H1 (cell line): ENCODE measurements at regions of chr1 and their contacts with region 1.

Region 1: GRCh38 chr1:20633190-20634064 is at the start of gene PINK1:
- DNase-seq: peak; percentile 67 to 100
- H3K4me3 ChIP-seq: peak within 1 kb of the TSS; percentile 70 to 80 (median 75)
- H3K27ac ChIP-seq: no peak within 1 kb of the TSS; the same call in 1 of the 2 replicates
- H3K4me1 ChIP-seq: peaks cover 0 to 7% (median 0%) of the 10 kb centered on the region in 4 experiments; a peak in 2 of 7 replicates
- H3K27me3 ChIP-seq: peaks cover 0 to 5% (median 0%) of the 10 kb centered on the region in 4 experiments; a peak in 2 of 7 replicates
- CTCF ChIP-seq: peak; percentile 93 to 97 (median 93)
- EP300 ChIP-seq: no peak
- POLR2A ChIP-seq: no peak
- RAD21 ChIP-seq: peak; percentile 76 to 82
- total RNA-seq, gene PINK1: 19.3 and 20.5 TPM in 2 replicates

Region 2: DNA sequence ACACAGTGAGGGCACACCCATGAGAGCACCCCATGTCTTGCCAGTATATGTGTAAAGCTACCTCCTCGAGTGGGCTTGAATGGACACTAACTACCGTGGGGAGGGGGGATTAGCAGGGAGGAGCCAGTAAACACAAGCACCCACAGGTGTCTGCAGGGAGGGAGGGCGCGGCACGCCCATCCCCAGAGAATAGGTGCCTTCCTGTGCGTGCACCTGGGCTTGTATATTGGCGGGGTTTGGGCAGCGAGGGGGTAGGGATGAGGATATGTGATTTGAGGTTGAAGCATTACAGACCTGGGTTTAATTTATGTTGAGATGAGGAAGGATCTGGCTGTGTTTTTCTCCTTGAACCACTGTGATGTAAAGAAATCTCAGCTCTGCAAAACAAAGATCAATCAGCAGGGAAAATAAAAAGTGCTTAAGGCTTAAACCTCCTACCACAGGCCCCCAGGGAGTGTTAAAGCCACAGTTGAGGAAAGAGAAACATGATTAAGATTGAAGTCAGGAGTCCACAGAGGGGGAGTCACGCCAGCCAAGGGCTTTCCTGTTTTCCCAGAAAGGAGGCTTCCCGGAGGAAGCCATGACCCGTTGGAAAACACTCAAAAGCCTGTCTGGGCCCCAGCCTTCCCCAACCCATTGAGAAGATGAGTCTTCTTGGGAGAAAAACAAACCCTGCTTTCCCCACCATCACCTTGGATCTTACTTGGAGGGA is 227.4 kb before region 1 on chr1:
- CTCF ChIA-PET with region 1: no interaction called
- POLR2A ChIA-PET with region 1: no interaction called
- DNase-seq: no peak
- H3K4me3 ChIP-seq: no peak overlapping the region
- H3K27ac ChIP-seq: no peak overlapping the region
- H3K4me1 ChIP-seq: peaks cover 0 to 4% (median 4%) of the 10 kb centered on the region in 4 experiments; a peak in 4 of 7 replicates
- H3K27me3 ChIP-seq: peaks cover 59 to 98% (median 83%) of the 10 kb centered on the region in 4 experiments
- CTCF ChIP-seq: no peak
- EP300 ChIP-seq: no peak
- POLR2A ChIP-seq: no peak
- RAD21 ChIP-seq: no peak

Region 3: GRCh38 chr1:20470194-20470593 is 163.2 kb before region 1 on chr1:
- CTCF ChIA-PET with region 1: no interaction called
- POLR2A ChIA-PET with region 1: no interaction called
- DNase-seq: no peak
- H3K4me3 ChIP-seq: no peak overlapping the region
- H3K27ac ChIP-seq: no peak overlapping the region
- H3K4me1 ChIP-seq: peaks cover 0 to 3% (median 0%) of the 10 kb centered on the region in 4 experiments; a peak in 2 of 7 replicates
- H3K27me3 ChIP-seq: peaks cover 0 to 6% (median 0%) of the 10 kb centered on the region in 4 experiments; a peak in 4 of 7 replicates
- CTCF ChIP-seq: no peak
- EP300 ChIP-seq: no peak
- POLR2A ChIP-seq: no peak
- RAD21 ChIP-seq: no peak

Region 4: DNA sequence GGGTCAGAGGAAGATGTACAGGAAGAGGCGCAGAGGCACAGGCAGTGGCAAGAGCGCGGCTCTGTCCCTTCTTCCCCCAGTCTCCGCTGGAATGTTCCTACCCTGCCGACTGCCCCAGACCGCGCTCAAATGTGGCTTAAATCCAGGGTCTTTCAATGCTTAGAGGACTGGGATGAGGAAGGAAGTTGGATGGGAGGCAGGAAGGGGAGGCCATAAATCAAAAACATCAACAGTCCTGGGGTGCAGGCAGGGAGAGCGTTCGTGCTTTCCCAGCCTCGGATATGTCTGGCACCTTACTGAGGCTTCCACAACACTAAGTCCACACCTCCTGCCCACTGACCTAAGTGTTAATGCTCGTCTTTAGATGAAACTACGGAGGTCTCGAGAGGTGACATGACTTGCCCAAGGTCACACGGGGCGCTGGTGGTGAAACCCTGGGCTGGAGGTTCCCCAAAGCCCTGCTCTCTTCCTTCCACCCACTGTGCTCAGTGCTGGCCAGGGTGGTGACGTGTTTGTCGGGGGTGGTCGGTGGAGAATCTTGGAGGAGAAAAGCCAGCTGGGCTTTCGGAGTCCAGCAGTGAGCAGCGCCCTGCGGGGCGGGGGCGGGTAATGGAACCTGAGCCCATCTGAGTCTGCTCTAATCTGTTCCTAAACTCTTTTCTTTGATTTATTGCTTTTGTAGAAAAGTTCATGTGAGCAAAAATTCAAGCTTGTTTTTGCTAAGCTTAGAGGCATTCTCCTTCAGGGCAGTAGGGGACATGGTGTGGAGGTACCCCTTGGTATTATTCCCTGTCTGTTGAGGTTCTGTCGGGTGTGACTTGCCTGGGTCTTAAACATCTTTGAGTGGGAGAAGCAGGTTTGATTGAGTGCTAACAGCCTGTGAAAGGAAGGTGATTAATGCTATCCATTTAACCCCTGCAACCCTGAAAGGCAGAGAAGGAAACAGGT is 43.8 kb before region 1 on chr1:
- CTCF ChIA-PET with region 1: interaction called, 28 read pairs
- POLR2A ChIA-PET with region 1: interaction called, 3 read pairs
- DNase-seq: no peak
- H3K4me3 ChIP-seq: peak overlapping the region in 1 of 4 experiments; percentile 30; a peak in 2 of 8 replicates
- H3K27ac ChIP-seq: no peak overlapping the region
- H3K4me1 ChIP-seq: peaks cover 0 to 16% (median 12%) of the 10 kb centered on the region in 4 experiments; a peak in 5 of 7 replicates
- H3K27me3 ChIP-seq: no peaks in the 10 kb centered on the region
- CTCF ChIP-seq: no peak
- EP300 ChIP-seq: no peak
- POLR2A ChIP-seq: no peak
- RAD21 ChIP-seq: no peak

Region 5: DNA sequence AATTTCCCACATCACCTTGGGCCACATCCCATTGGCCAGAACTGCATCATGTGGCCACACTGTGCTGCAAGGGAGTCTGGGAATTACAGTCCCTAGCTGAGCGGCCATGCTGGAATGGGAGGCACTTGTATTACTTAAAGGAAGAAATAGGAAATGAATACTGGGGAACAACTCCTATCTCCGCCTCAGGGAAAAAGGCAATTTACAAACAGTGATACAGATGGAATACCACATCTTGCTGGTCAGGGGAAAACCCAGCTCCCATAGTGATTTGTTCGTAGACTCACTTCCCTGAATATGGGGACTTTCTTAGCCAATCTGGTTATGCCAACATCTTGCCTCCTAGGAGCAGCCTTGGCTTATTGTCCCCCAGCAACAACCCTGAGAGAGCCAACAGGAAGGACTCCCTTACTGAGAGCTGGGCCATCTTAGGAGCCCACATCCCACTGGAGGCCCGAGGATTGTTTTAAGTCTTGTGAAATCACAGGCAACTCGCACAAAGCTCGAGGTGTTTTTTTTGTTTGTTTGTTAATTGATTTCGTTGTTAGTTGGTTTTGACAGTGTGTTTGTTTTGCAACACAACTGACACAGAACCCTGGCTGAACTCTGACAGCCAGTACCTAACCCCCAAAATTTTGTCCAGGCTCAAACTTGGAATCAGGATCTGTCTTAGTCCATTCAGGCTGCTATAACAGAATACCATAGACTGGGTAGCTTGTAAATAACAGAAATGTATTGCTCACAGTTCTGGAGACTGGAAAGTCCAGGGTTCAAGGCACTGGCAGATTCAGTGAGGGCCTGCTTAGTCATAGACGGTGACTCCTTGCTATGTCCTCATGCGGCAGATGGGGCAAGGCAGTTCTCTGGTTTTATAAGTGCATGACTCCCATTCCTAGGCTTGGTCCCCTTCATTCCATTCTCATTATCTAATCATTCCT is 29.6 kb before region 1 on chr1:
- CTCF ChIA-PET with region 1: interaction called, 13 read pairs
- POLR2A ChIA-PET with region 1: no interaction called
- DNase-seq: no peak
- H3K4me3 ChIP-seq: no peak overlapping the region
- H3K27ac ChIP-seq: no peak overlapping the region
- H3K4me1 ChIP-seq: no peaks in the 10 kb centered on the region
- H3K27me3 ChIP-seq: no peaks in the 10 kb centered on the region
- CTCF ChIP-seq: no peak
- EP300 ChIP-seq: no peak
- POLR2A ChIP-seq: no peak
- RAD21 ChIP-seq: no peak

Region 6: GRCh38 chr1:20618550-20618949 is 14.9 kb before region 1 on chr1:
- CTCF ChIA-PET with region 1: interaction called, 13 read pairs
- POLR2A ChIA-PET with region 1: interaction called, 3 read pairs
- DNase-seq: no peak
- H3K4me3 ChIP-seq: no peak overlapping the region
- H3K27ac ChIP-seq: no peak overlapping the region
- H3K4me1 ChIP-seq: peaks cover 0 to 4% (median under 1%) of the 10 kb centered on the region in 4 experiments; a peak in 2 of 7 replicates
- H3K27me3 ChIP-seq: no peaks in the 10 kb centered on the region
- CTCF ChIP-seq: no peak
- EP300 ChIP-seq: no peak
- POLR2A ChIP-seq: no peak
- RAD21 ChIP-seq: no peak

Region 7: GRCh38 chr1:20682571-20683236 is 49.3 kb after region 1 on chr1:
- CTCF ChIA-PET with region 1: no interaction called
- POLR2A ChIA-PET with region 1: no interaction called
- DNase-seq: no peak
- H3K4me3 ChIP-seq: no peak overlapping the region
- H3K27ac ChIP-seq: no peak overlapping the region
- H3K4me1 ChIP-seq: no peaks in the 10 kb centered on the region; a peak in 1 of 7 replicates
- H3K27me3 ChIP-seq: no peaks in the 10 kb centered on the region; a peak in 1 of 7 replicates
- CTCF ChIP-seq: no peak
- EP300 ChIP-seq: no peak
- POLR2A ChIP-seq: no peak
- RAD21 ChIP-seq: no peak

Region 8: DNA sequence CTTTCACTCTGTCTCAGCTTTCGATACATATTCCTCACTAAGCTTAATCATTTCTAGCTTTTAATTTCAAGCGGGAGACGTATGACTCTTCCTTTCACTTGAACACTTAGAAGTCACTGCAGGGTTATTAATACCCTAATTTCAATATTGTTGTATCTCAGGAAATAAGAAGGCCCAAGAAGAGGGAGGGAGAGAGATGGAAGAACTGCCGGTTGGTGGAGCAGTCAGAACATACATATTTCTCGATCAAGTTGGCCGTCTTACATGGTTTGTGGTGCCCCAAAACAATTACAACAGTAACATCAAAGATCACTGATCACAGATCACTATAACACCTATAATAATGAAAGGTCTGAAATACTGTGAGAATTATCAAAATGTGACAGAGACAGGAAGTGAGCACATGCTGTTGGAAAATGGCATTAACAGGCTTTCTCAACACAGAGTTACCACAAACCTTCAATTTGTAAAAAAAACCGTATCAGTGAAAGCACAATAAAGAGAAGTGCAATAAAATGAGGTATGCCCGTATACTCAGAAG is 299.1 kb after region 1 on chr1:
- CTCF ChIA-PET with region 1: no interaction called
- POLR2A ChIA-PET with region 1: no interaction called
- DNase-seq: no peak
- H3K4me3 ChIP-seq: no peak overlapping the region
- H3K27ac ChIP-seq: no peak overlapping the region
- H3K4me1 ChIP-seq: peaks cover 0 to 6% (median 4%) of the 10 kb centered on the region in 4 experiments; a peak in 3 of 7 replicates
- H3K27me3 ChIP-seq: no peaks in the 10 kb centered on the region
- CTCF ChIP-seq: no peak
- EP300 ChIP-seq: no peak
- POLR2A ChIP-seq: no peak
- RAD21 ChIP-seq: no peak